ENCODE measurements at regions of chr1 and their contacts with region 1.

Region 1: GRCh38 chr1:107724648-107725047 is 240.3 kb downstream of the VAV3 start:
- DNase-seq: no peak
- H3K4me3 ChIP-seq: no peak overlapping the region
- H3K27ac ChIP-seq: peak overlapping the region in 3 of 4 donors; percentile 36 to 65 (median 43)
- H3K4me1 ChIP-seq: peaks cover 0 to 24% (median 9%) of the 10 kb centered on the region in 4 donors
- H3K27me3 ChIP-seq: no peaks in the 10 kb centered on the region
- CTCF ChIP-seq: no peak
- EP300 ChIP-seq: no peak
- POLR2A ChIP-seq: no peak

Region 2: GRCh38 chr1:107683191-107683657 is 41.4 kb before region 1 on chr1:
- intact Hi-C with region 1: loop called (anchors 2 kb)
- DNase-seq: no peak
- H3K4me3 ChIP-seq: no peak overlapping the region
- H3K27ac ChIP-seq: peak overlapping the region in 3 of 4 donors; percentile 74 to 76 (median 74)
- H3K4me1 ChIP-seq: peaks cover 0 to 57% (median 19%) of the 10 kb centered on the region in 4 donors
- H3K27me3 ChIP-seq: no peaks in the 10 kb centered on the region
- CTCF ChIP-seq: no peak
- EP300 ChIP-seq: peak in 1 of 4 donors; percentile 8
- POLR2A ChIP-seq: no peak